Heart right ventricle (tissue), 16 donors: ENCODE measurements at regions of chr15 and their contacts with region 1.

Region 1: DNA sequence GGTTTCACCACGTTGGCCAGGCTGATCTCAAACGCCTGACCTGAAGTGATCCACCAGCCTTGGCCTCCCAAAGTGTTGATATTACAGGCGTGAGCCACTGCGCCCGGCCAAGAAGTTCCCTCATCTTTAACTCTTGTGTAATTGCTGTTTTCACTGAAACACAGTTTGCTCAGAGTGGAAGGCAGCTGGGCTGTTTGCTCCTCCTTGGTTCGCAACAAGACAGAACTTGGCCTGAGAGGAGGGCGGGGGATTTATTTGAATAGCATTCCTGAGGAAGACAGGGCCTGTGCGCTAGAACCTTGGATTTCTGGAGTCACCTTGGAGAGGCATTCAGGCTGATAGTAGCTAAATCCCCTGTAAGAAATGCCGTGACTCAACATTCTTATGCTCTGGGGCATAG is 226.7 kb upstream of the MCTP2 start:
- DNase-seq: peak; percentile 16 to 24
- ATAC-seq: peak in 7 of 8 donors; percentile 36 to 90 (median 57)
- H3K4me3 ChIP-seq: no peak overlapping the region
- H3K27ac ChIP-seq: peak overlapping the region in 3 of 10 donors; percentile 20 to 39 (median 25)
- H3K4me1 ChIP-seq: peaks cover 0 to 8% (median 0%) of the 10 kb centered on the region in 9 donors
- H3K27me3 ChIP-seq: peaks cover 0 to 8% (median 0%) of the 10 kb centered on the region in 7 donors
- CTCF ChIP-seq: no peak

Region 2: GRCh38 chr15:93703092-93703739 is 301.5 kb before region 1 on chr15:
- intact Hi-C with region 1: no loop called
- DNase-seq: no peak
- ATAC-seq: no peak
- H3K4me3 ChIP-seq: no peak overlapping the region
- H3K27ac ChIP-seq: no peak overlapping the region
- H3K4me1 ChIP-seq: peaks cover 0 to 7% (median 0%) of the 10 kb centered on the region in 9 donors
- H3K27me3 ChIP-seq: no peaks in the 10 kb centered on the region
- CTCF ChIP-seq: no peak

Region 3: GRCh38 chr15:94070356-94071295 is 65.9 kb after region 1 on chr15:
- intact Hi-C with region 1: loop called in 1 of 10 experiments (anchors 10 kb)
- DNase-seq: no peak
- ATAC-seq: no peak
- H3K4me3 ChIP-seq: no peak overlapping the region
- H3K27ac ChIP-seq: no peak overlapping the region
- H3K4me1 ChIP-seq: no peaks in the 10 kb centered on the region
- H3K27me3 ChIP-seq: peaks cover 0 to 3% (median 0%) of the 10 kb centered on the region in 7 donors
- CTCF ChIP-seq: no peak

Region 4: DNA sequence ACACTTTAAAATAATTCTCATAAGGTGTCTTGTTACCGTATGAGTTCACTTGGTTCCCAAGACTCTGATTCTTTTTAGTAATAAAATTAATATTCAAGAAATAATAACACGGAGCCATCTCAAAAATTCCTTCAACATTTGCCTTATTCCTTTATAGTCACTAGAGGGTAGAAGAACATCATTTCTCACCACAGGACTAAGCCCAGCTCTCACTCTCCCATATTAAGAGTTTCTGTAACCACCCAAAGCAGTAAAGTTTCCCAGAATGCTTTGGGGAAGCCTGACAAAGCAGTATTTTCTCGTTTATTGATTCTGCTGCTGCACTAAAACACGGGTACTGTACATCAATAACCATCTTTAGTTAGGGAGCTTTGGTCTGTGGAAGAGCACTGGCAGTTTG is 341.6 kb after region 1 on chr15:
- intact Hi-C with region 1: loop called in 1 of 10 experiments (anchors 5 kb)
- DNase-seq: no peak
- ATAC-seq: no peak
- H3K4me3 ChIP-seq: no peak overlapping the region
- H3K27ac ChIP-seq: no peak overlapping the region
- H3K4me1 ChIP-seq: no peaks in the 10 kb centered on the region
- H3K27me3 ChIP-seq: peaks cover 0 to 5% (median 0%) of the 10 kb centered on the region in 7 donors
- CTCF ChIP-seq: no peak